Mammary epithelial cell (primary cell): ENCODE measurements at regions of chr5 and their contacts with region 1.

Region 1: DNA sequence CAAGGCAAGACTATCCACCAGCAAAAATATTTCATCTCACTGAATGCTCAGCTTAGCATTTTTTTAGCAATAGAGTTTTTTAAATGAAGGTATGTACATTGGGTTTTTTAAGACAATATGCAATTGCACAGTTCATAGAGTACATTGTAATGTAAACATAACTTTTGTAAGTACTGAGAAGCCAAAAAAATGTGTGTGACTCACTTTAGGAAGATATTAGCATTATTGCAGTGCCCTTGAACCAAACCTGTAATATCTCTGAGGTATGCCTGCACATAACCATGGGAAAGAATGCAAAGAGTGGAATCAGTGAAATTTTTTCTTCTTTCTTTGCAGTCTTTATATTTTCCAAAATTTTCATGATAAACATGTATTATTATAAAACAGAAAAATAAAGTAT is 1533.3 kb upstream of the WWC1 start:
- DNase-seq: peak; percentile 8
- H3K4me3 ChIP-seq: no peak overlapping the region
- H3K27ac ChIP-seq: no peak overlapping the region
- H3K4me1 ChIP-seq: no peaks in the 10 kb centered on the region
- H3K27me3 ChIP-seq: no peaks in the 10 kb centered on the region
- CTCF ChIP-seq: no peak

Region 2: DNA sequence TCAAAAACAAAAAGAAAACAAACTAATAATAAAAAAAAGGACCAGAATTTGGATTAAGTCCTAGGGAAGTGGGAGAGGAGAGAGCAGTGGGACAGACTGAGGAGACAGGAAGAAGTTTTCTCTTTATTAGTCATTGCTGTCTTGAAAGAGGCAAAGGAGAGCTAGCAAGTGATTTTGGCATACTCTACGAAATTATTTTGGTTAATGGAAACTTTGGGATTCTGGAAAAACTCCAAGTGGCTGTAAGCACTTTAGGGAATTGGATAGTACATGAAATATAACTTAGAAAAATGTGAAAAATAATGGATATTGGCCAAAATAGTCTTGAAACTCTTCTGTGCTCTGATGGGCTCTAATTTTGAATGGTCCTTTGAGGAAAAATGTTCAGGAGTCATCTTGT is 108.5 kb before region 1 on chr5:
- CTCF ChIA-PET with region 1: no interaction called
- dilution Hi-C with region 1: no loop called
- in situ Hi-C with region 1: no loop called
- intact Hi-C with region 1: no loop called
- DNase-seq: no peak
- H3K4me3 ChIP-seq: no peak overlapping the region
- H3K27ac ChIP-seq: no peak overlapping the region
- H3K4me1 ChIP-seq: no peaks in the 10 kb centered on the region
- H3K27me3 ChIP-seq: no peaks in the 10 kb centered on the region
- CTCF ChIP-seq: no peak

Region 3: DNA sequence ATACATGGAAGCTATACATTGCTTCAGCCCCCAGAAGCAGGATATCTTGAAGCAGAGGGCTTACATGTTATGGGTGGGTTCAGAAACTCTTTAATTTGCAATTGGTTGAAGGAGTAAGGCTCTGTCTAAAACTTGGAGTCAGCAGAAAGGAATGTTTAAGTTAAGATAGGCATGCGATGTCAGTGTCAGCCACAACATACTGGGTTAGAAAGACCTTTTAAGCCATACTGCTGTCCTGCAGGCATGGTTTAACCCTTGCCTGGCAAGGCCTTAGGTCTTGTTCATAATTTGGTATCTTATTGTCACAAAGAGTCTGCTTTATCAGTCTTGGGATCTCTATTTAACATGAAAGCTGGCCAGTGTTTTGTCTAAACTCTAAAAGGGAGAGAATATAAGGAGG is 86.3 kb before region 1 on chr5:
- CTCF ChIA-PET with region 1: no interaction called
- dilution Hi-C with region 1: loop called (anchors 5 kb)
- in situ Hi-C with region 1: no loop called
- intact Hi-C with region 1: no loop called
- DNase-seq: no peak
- H3K4me3 ChIP-seq: no peak overlapping the region
- H3K27ac ChIP-seq: no peak overlapping the region
- H3K4me1 ChIP-seq: no peaks in the 10 kb centered on the region
- H3K27me3 ChIP-seq: no peaks in the 10 kb centered on the region
- CTCF ChIP-seq: no peak

Region 4: DNA sequence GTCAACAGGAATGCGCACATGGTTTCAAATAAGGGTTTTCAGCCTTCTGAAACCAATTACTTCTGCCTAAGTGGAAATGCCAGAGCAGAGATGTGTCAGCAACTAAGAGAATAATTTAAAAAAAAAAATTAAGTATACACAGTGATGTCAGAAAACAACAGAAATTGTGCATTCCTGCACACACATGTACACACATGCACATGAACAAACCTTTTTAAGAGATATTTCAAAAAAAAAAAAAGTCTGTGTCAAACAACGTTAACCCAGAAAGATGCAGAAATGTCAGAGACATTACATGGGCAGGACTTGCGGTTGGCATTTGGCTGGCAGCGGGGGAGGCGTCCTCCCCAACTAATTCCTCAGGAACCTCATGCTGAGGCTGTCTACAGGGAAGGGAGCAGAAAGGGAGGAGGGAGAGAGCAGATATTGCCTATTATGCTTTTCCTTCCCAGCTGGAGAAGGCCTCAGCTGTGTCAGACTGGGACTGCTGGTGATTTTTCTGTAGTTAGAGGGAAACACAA is 996.4 kb after region 1 on chr5:
- CTCF ChIA-PET with region 1: no interaction called
- dilution Hi-C with region 1: no loop called
- in situ Hi-C with region 1: no loop called
- intact Hi-C with region 1: no loop called
- DNase-seq: no peak
- H3K4me3 ChIP-seq: no peak overlapping the region
- H3K27ac ChIP-seq: no peak overlapping the region
- H3K4me1 ChIP-seq: peaks cover 15% of the 10 kb centered on the region
- H3K27me3 ChIP-seq: no peaks in the 10 kb centered on the region
- CTCF ChIP-seq: no peak